GM10248 (cell line): ENCODE measurements at regions of chr22 and their contacts with region 1.

Region 1: DNA sequence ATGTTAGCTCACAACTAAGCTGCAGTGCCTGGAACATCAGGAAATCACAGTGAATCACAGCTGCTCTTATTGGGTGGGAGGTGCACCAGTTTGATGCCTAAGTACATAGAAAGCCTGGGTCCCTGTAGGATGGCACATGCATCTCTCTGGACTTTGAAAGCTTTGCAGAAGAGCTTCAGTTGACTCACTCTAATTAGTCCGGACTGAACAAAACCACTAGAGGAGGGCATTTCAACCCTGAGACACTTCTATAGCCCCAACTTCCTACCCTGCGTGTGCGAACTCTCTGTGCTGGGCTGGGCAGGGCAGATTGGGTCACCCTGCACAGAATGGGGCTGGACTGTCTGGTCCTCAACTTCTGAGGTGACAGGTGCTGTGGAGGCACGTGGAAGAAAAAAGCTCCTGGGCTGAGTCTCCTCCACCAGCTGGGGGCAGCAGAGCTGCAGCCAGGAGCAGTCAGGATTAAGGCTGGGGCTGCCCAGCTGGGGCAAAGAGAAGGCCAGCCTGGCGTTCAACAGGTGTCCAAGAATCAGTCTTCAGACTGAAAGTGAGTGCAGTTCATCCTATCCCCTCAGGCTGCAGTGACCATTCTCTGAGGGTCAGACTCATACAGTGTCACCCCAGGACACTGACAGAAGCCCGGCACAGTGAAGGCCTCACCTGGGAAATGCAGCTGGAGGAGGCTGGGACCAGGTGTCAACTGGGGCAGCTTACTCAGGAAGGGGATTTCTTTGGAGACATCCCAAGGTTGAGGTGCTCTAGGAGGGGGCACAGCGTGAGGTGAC is 22.1 kb downstream of the GGTLC2 start:
- DNase-seq: peak; percentile 58
- CTCF ChIP-seq: peak; percentile 61

Region 2: DNA sequence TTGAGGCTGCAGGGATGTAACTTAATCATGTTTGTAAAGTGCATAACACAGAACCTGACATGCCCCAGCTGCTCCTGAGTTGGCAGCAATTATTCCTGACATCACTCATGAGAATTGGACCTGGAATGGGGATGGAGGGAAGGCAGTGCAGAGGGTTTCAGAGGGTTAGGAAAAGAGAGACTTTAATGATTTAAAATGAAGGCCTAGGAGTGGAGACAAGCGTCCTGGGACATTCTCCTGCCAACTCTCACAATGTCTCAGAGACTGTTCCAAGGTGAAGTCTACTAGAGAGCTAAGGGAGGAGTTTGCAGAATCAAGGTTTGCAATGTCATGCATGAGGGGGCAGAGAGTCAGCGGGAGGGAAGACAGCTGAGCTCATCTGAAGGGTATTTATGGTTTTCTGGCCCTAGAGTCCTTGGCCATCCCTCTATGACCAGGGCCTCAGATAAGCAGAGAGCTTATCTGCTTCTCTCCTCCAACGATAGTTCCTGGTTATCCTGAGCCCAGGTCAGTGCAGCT is 14.8 kb after region 1 on chr22:
- CTCF ChIA-PET with region 1: interaction called, 42 read pairs
- POLR2A ChIA-PET with region 1: no interaction called
- DNase-seq: no peak
- CTCF ChIP-seq: no peak